ENCODE measurements at regions of chr15 and their contacts with region 1.

Region 1: GRCh38 chr15:77543159-77543882 is 89.4 kb downstream of the LINGO1 start:
- DNase-seq: peak; percentile 49 to 82 (median 71)
- ATAC-seq: peak; percentile 89
- H3K4me3 ChIP-seq: peak overlapping the region; percentile 80
- H3K4me3 Mint-ChIP-seq: peak overlapping the region; percentile 71 to 83 (median 78)
- H3K27ac ChIP-seq: peak overlapping the region; percentile 30
- H3K27ac Mint-ChIP-seq: peak overlapping the region in 6 of 9 donors; percentile 38 to 69 (median 48)
- H3K4me1 ChIP-seq: peaks cover 6% of the 10 kb centered on the region in 2 donors
- H3K4me1 Mint-ChIP-seq: peaks cover 0 to 12% (median 6%) of the 10 kb centered on the region in 7 donors
- H3K27me3 ChIP-seq: no peaks in the 10 kb centered on the region
- H3K27me3 Mint-ChIP-seq: peaks cover 0 to 12% (median 4%) of the 10 kb centered on the region in 5 donors

Region 2: DNA sequence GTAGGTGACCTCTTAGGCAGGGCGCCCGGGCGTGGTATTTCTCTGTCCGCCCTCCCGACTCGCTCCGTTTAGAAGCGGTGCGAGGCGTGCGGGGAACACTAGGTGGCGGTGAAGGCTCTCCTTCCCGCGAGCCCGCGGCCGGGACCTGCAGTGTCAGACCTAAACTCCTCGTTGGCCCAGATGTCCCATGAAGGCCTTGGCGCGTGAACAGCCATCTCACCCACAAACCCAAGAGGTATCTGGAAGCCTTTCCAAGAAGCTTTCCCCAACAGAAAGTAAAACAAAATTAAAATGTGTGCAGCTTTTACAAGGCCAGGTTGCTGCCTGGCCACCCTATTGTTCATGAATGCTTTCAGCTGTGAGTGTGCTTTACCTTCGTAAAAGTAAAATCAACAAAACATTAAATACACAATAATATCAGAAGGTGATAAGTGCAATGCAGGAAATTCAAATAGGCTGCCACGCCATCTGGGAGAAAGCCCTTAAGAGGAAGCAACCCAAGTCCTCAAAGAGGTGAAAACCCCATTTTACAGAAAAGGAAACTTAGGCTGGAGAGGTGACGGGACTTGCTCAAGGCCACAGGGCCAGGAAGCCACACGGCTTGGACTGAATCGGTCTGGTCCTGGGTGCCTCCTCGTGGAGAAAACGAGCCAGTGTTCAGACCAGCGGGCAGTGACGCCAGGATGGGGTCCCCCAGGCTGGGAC is 1352.3 kb before region 1 on chr15:
- CTCF ChIA-PET with region 1: interaction called, 3 read pairs
- POLR2A ChIA-PET with region 1: no interaction called
- intact Hi-C with region 1: loop called in 1 of 2 experiments (anchors 1 kb)
- DNase-seq: peak; percentile 13 to 75 (median 43)
- ATAC-seq: peak; percentile 88
- H3K4me3 ChIP-seq: no peak overlapping the region
- H3K4me3 Mint-ChIP-seq: peak overlapping the region; percentile 37 to 71 (median 66)
- H3K27ac ChIP-seq: no peak overlapping the region
- H3K27ac Mint-ChIP-seq: no peak overlapping the region
- H3K4me1 ChIP-seq: no peaks in the 10 kb centered on the region
- H3K4me1 Mint-ChIP-seq: peaks cover 8 to 13% (median 13%) of the 10 kb centered on the region in 7 donors
- H3K27me3 ChIP-seq: peaks cover 0 to 3% of the 10 kb centered on the region in 2 donors
- H3K27me3 Mint-ChIP-seq: peaks cover 31 to 51% (median 37%) of the 10 kb centered on the region in 5 donors

Region 3: GRCh38 chr15:77107531-77108355 is 435.6 kb before region 1 on chr15:
- CTCF ChIA-PET with region 1: interaction called, 8 read pairs
- POLR2A ChIA-PET with region 1: no interaction called
- intact Hi-C with region 1: loop called (anchors 1 to 2 kb)
- DNase-seq: peak in 6 of 9 donors; percentile 12 to 30 (median 21)
- ATAC-seq: no peak
- H3K4me3 ChIP-seq: no peak overlapping the region
- H3K4me3 Mint-ChIP-seq: no peak overlapping the region
- H3K27ac ChIP-seq: no peak overlapping the region
- H3K27ac Mint-ChIP-seq: peak overlapping the region in 1 of 9 donors; percentile 8
- H3K4me1 ChIP-seq: no peaks in the 10 kb centered on the region
- H3K4me1 Mint-ChIP-seq: peaks cover 0 to 9% (median 0%) of the 10 kb centered on the region in 7 donors
- H3K27me3 ChIP-seq: no peaks in the 10 kb centered on the region
- H3K27me3 Mint-ChIP-seq: no peaks in the 10 kb centered on the region

Region 4: DNA sequence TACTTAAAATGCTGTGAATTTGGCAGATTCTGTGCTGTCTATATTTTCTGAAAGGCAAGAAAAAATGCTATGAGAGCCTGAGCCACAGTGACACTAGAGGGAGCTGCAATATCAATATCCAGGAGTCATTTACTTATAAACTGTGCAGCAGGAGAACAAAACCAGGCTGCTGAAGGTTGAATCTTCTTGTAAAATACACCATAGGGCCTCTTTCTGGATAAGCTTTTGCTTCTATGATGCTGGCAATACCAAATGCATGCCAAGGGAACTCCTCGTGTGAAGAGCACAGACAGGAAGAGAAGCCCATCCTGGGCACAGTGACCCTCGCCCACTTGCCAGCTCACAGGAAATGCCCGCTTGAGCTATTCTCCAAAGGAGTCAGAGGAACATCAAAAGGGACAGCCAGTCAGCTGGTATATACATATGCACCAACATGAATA is 424.4 kb before region 1 on chr15:
- CTCF ChIA-PET with region 1: interaction called, 24 read pairs
- POLR2A ChIA-PET with region 1: no interaction called
- intact Hi-C with region 1: loop called (anchors 1 kb)
- DNase-seq: peak in 7 of 9 donors; percentile 19 to 63 (median 47)
- ATAC-seq: peak; percentile 70
- H3K4me3 ChIP-seq: no peak overlapping the region
- H3K4me3 Mint-ChIP-seq: no peak overlapping the region
- H3K27ac ChIP-seq: no peak overlapping the region
- H3K27ac Mint-ChIP-seq: no peak overlapping the region
- H3K4me1 ChIP-seq: no peaks in the 10 kb centered on the region
- H3K4me1 Mint-ChIP-seq: peaks cover 0 to 12% (median 6%) of the 10 kb centered on the region in 7 donors
- H3K27me3 ChIP-seq: no peaks in the 10 kb centered on the region
- H3K27me3 Mint-ChIP-seq: no peaks in the 10 kb centered on the region

Region 5: GRCh38 chr15:77186594-77187011 is 356.7 kb before region 1 on chr15:
- CTCF ChIA-PET with region 1: interaction called, 6 read pairs
- POLR2A ChIA-PET with region 1: no interaction called
- intact Hi-C with region 1: loop called (anchors 1 to 2 kb)
- DNase-seq: peak in 3 of 9 donors; percentile 13 to 30 (median 18)
- ATAC-seq: no peak
- H3K4me3 ChIP-seq: no peak overlapping the region
- H3K4me3 Mint-ChIP-seq: no peak overlapping the region
- H3K27ac ChIP-seq: no peak overlapping the region
- H3K27ac Mint-ChIP-seq: no peak overlapping the region
- H3K4me1 ChIP-seq: peaks cover under 1 to 7% of the 10 kb centered on the region in 2 donors
- H3K4me1 Mint-ChIP-seq: peaks cover 12 to 57% (median 46%) of the 10 kb centered on the region in 7 donors
- H3K27me3 ChIP-seq: no peaks in the 10 kb centered on the region
- H3K27me3 Mint-ChIP-seq: no peaks in the 10 kb centered on the region

Region 6: DNA sequence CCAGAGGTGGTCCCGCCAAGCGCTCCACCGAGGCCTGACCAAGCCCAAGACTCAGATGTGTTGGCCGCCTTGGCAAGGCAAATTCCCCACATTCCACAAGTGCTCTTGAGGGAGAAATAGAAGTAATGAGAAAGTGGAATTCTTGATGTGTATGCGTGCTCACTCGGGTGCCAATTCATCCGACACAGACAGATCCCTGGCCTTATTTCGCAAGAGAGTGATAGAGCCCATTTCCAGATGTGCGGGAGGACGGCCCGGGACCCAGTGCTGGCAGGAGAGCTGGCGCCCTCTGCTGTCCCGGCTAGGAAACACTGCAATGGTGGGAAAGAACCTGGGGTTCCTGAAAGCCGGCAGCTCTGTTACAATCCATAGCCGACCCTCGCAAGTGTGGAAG is 46.6 kb before region 1 on chr15:
- CTCF ChIA-PET with region 1: interaction called, 4 read pairs
- POLR2A ChIA-PET with region 1: no interaction called
- intact Hi-C with region 1: loop called in 1 of 2 experiments (anchors 2 kb)
- DNase-seq: peak; percentile 37 to 76 (median 60)
- ATAC-seq: peak; percentile 84
- H3K4me3 ChIP-seq: no peak overlapping the region
- H3K4me3 Mint-ChIP-seq: no peak overlapping the region
- H3K27ac ChIP-seq: no peak overlapping the region
- H3K27ac Mint-ChIP-seq: no peak overlapping the region
- H3K4me1 ChIP-seq: peaks cover 3 to 5% of the 10 kb centered on the region in 2 donors
- H3K4me1 Mint-ChIP-seq: peaks cover 13 to 29% (median 24%) of the 10 kb centered on the region in 7 donors
- H3K27me3 ChIP-seq: no peaks in the 10 kb centered on the region
- H3K27me3 Mint-ChIP-seq: no peaks in the 10 kb centered on the region